Body of pancreas (tissue), 4 donors: ENCODE measurements at regions of chr1 and their contacts with region 1.

Region 1: DNA sequence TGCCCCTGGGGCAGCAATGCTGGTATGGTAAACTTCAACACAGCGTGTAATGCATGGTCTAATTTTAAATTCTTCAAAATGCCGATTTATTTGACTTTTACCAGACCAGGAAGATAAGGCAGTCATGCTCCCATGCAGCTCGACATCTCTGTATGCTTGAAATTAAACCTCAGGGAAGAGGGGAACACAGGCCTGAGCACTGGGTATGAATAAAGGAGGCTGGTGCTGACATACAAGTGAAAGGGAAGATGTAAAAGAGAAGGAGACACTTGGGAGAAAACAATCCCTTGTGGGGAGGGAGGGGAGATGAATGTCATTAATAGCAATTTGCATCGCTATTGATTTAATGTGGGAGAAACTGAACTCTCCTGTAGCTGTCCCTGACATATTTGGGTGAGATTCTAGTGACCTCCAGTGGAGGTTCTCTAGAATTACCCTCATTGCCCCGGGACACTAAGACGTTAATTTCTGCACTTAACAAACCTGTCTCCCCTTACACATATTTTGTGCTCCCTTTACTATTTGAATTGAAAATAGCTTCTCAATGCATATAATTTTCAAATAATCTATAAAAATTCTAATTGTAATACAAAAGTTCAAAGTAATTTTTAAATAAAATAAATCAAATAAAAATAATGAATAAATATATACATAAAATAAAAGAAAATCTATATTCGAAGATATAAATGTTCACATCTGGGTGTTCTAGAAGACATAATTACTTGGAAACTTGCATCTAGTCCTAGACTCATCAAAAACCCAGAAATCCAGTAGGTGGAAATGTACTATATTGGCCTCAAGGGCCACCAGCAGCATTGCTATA is 283.1 kb downstream of the LMX1A start:
- DNase-seq: peak in 3 of 4 donors; percentile 13 to 27 (median 14)
- ATAC-seq: peak; percentile 70
- H3K4me3 ChIP-seq: no peak overlapping the region
- H3K27ac ChIP-seq: no peak overlapping the region
- H3K4me1 ChIP-seq: no peaks in the 10 kb centered on the region
- H3K27me3 ChIP-seq: no peaks in the 10 kb centered on the region
- CTCF ChIP-seq: peak; percentile 63 to 89 (median 85)
- POLR2A ChIP-seq: no peak

Region 2: GRCh38 chr1:163528710-163529348 is 1544.6 kb before region 1 on chr1:
- intact Hi-C with region 1: loop called (anchors 10 kb)
- DNase-seq: peak in 3 of 4 donors; percentile 16 to 42 (median 33)
- ATAC-seq: peak; percentile 59
- H3K4me3 ChIP-seq: no peak overlapping the region
- H3K27ac ChIP-seq: no peak overlapping the region
- H3K4me1 ChIP-seq: no peaks in the 10 kb centered on the region
- H3K27me3 ChIP-seq: no peaks in the 10 kb centered on the region
- CTCF ChIP-seq: peak; percentile 26 to 62 (median 53)
- POLR2A ChIP-seq: no peak

Region 3: GRCh38 chr1:164163289-164163864 is 910.0 kb before region 1 on chr1:
- intact Hi-C with region 1: loop called (anchors 10 kb)
- DNase-seq: no peak
- ATAC-seq: no peak
- H3K4me3 ChIP-seq: no peak overlapping the region
- H3K27ac ChIP-seq: no peak overlapping the region
- H3K4me1 ChIP-seq: no peaks in the 10 kb centered on the region
- H3K27me3 ChIP-seq: no peaks in the 10 kb centered on the region
- CTCF ChIP-seq: no peak
- POLR2A ChIP-seq: no peak